ENCODE measurements at regions of chr5 and their contacts with region 1.

Region 1: GRCh38 chr5:1799602-1800471 is at the start of gene MRPL36:
- DNase-seq: peak; percentile 49 to 89
- H3K4me3 ChIP-seq: peak within 1 kb of the TSS; percentile 87 to 94 (median 93)
- H3K27ac ChIP-seq: peak within 1 kb of the TSS; percentile 88
- H3K4me1 ChIP-seq: peaks cover 0 to 7% (median 5%) of the 10 kb centered on the region in 4 experiments; a peak in 6 of 7 replicates
- H3K27me3 ChIP-seq: no peaks in the 10 kb centered on the region
- CTCF ChIP-seq: peak in 1 of 3 experiments; percentile 1; a peak in 1 of 4 replicates
- EP300 ChIP-seq: no peak
- POLR2A ChIP-seq: peak in 1 of 2 experiments; percentile 61; a peak in 2 of 3 replicates
- RAD21 ChIP-seq: no peak
- total RNA-seq, gene MRPL36: 56.3 and 66.3 TPM in 2 replicates

Region 2: GRCh38 chr5:1641560-1642166 is 158.2 kb before region 1 on chr5:
- CTCF ChIA-PET with region 1: no interaction called
- POLR2A ChIA-PET with region 1: no interaction called
- DNase-seq: peak in 1 of 2 experiments; percentile 68
- H3K4me3 ChIP-seq: peak overlapping the region in 1 of 4 experiments; percentile 32; a peak in 1 of 8 replicates
- H3K27ac ChIP-seq: no peak overlapping the region
- H3K4me1 ChIP-seq: peaks cover 2 to 28% (median 8%) of the 10 kb centered on the region in 4 experiments
- H3K27me3 ChIP-seq: peaks cover 0 to 17% (median 11%) of the 10 kb centered on the region in 4 experiments; a peak in 6 of 7 replicates
- CTCF ChIP-seq: peak; percentile 73 to 98 (median 90)
- EP300 ChIP-seq: no peak
- POLR2A ChIP-seq: no peak
- RAD21 ChIP-seq: peak; percentile 76 to 79

Region 3: GRCh38 chr5:1827886-1828397 is 28.1 kb after region 1 on chr5:
- CTCF ChIA-PET with region 1: interaction called, 4 read pairs
- POLR2A ChIA-PET with region 1: interaction called, 12 read pairs
- DNase-seq: peak in 1 of 2 experiments; percentile 81
- H3K4me3 ChIP-seq: peak overlapping the region in 2 of 4 experiments; percentile 16 to 47; a peak in 3 of 8 replicates
- H3K27ac ChIP-seq: no peak overlapping the region
- H3K4me1 ChIP-seq: peaks cover 0 to 13% (median 7%) of the 10 kb centered on the region in 4 experiments; a peak in 6 of 7 replicates
- H3K27me3 ChIP-seq: no peaks in the 10 kb centered on the region
- CTCF ChIP-seq: no peak
- EP300 ChIP-seq: no peak
- POLR2A ChIP-seq: no peak
- RAD21 ChIP-seq: no peak

Region 4: GRCh38 chr5:1910081-1910760 is 110.4 kb after region 1 on chr5:
- CTCF ChIA-PET with region 1: no interaction called
- POLR2A ChIA-PET with region 1: no interaction called
- DNase-seq: no peak
- H3K4me3 ChIP-seq: no peak overlapping the region
- H3K27ac ChIP-seq: no peak overlapping the region
- H3K4me1 ChIP-seq: no peaks in the 10 kb centered on the region
- H3K27me3 ChIP-seq: no peaks in the 10 kb centered on the region
- CTCF ChIP-seq: no peak
- EP300 ChIP-seq: no peak
- POLR2A ChIP-seq: no peak
- RAD21 ChIP-seq: no peak

Measured in H1 (cell line).